Adrenal gland (tissue), 19 donors: ENCODE measurements at regions of chr1 and their contacts with region 1.

Region 1: DNA sequence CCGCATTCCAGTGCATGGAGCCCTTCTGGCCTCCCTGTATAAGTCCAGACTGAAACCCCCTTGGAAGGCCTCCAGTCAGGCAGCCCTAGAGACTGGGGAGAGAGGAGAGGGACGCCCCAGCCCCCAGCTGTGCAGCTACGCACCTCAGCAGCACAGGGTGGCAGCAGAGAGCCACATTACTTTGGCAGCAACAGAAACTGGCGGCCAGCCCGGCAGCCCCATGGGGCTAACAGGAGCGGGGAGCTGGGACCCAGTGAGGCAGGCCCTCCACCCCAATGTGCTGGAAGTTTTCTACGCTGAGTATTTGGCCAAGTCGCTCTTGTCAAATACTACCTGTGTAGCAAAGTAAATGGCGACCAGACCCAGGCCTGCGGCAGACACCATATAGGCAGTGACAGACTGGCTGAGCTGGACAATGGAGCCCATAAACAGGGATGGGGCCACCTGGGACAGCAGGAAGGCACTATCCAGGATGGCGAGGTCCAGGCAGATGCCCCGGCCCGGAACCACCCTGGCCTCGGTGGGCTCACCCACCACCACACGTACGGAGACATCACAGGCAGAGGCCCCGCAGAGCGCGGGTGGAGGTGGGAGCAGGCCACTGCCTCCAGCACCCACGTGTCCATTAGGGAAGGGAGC is 21.2 kb downstream of the SLC45A3 start:
- DNase-seq: peak; percentile 72 to 88 (median 83)
- H3K4me3 ChIP-seq: no peak overlapping the region
- H3K27ac ChIP-seq: no peak overlapping the region
- H3K4me1 ChIP-seq: no peaks in the 10 kb centered on the region
- H3K27me3 ChIP-seq: no peaks in the 10 kb centered on the region
- CTCF ChIP-seq: peak; percentile 59 to 94 (median 88)
- POLR2A ChIP-seq: no peak

Region 2: GRCh38 chr1:205536759-205537361 is 122.2 kb before region 1 on chr1:
- intact Hi-C with region 1: loop called (anchors 5 to 10 kb)
- DNase-seq: peak in 6 of 7 donors; percentile 35 to 62 (median 42)
- H3K4me3 ChIP-seq: no peak overlapping the region
- H3K27ac ChIP-seq: no peak overlapping the region
- H3K4me1 ChIP-seq: no peaks in the 10 kb centered on the region
- H3K27me3 ChIP-seq: peaks cover 3% of the 10 kb centered on the region
- CTCF ChIP-seq: no peak
- POLR2A ChIP-seq: no peak

Region 3: DNA sequence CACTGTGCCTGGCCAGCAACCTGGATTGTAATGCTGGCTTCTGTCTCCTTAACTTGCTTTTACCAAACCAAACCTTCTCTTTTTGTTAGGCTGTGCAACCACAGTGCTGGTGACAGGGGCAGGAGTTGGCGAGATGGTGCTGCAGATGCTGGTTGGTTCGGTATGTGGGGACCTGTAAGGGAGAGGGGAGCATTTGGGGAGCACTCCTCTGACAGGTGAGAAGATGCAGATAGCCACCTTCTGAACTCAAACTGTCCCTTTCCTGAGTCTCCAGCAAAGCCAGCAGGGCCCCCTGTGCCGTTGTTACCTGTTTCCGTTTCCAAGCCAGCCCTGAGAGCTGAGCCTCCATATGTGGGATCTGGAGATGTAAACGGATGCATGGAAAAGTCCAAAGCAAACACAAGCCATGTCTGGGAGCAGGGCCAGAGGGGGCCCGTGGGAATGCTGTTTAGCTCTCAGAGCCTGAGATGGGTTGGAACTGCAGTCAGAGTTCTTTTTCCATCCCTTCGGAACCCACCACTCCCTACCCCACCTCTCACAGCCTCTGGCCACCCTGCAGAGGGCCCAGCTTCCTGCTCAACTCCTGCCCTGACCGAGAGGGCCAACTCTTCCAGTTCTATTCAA is 61.3 kb before region 1 on chr1:
- intact Hi-C with region 1: loop called in 1 of 2 experiments (anchors 2 kb)
- DNase-seq: peak in 3 of 7 donors; percentile 8 to 39 (median 11)
- H3K4me3 ChIP-seq: no peak overlapping the region
- H3K27ac ChIP-seq: no peak overlapping the region
- H3K4me1 ChIP-seq: peaks cover 0 to 14% of the 10 kb centered on the region in 2 donors
- H3K27me3 ChIP-seq: no peaks in the 10 kb centered on the region
- CTCF ChIP-seq: no peak
- POLR2A ChIP-seq: no peak

Region 4: GRCh38 chr1:205766038-205766437 is 107.0 kb after region 1 on chr1:
- intact Hi-C with region 1: no loop called
- DNase-seq: no peak
- H3K4me3 ChIP-seq: no peak overlapping the region
- H3K27ac ChIP-seq: no peak overlapping the region
- H3K4me1 ChIP-seq: no peaks in the 10 kb centered on the region
- H3K27me3 ChIP-seq: no peaks in the 10 kb centered on the region
- CTCF ChIP-seq: no peak
- POLR2A ChIP-seq: no peak